ENCODE measurements at regions of chr1 and their contacts with region 1.

Region 1: DNA sequence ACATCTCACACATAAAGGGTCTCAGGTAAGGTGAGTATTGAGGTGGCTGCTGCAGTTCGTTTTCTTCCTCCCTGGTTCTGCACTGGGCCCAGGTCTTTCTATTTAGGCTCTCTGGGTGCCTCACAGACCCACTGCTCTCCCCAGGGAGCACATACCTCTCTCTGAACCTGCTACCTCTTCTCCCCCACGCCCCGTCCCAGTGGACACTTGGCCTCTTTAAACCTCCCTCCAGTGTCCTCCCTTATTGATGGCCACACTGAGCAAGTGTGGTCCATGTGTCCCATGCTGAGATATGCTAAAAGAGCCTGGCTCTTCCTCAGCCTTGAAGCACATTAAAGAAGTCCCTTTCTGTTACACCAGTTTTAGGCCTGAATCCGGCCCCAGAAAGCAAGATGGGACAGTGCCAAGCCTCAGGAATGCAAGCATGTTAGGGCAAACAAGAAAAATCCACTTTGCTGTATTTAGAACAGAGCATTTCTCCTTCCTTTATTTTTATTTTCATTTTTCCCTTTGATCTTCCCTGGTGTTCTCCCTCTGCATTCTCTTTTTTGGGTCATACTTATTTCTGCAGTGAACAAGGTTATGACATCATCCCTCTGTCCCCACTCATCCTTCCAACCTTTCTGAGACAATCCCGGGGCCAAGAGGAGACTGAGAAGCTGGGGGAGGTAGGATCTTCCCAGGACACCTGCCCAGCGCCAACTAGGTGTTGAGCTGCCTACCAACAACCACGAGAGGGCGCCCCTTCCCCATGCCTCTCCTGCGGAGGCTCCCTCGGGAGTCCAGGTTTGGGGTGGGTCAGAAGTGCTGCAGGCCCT is 5.0 kb upstream of the CHI3L2 start:
- DNase-seq: peak; percentile 43 to 89 (median 80)
- ATAC-seq: peak; percentile 17
- H3K4me3 ChIP-seq: peak overlapping the region; percentile 38 to 42
- H3K4me3 Mint-ChIP-seq: peak overlapping the region; percentile 81
- H3K27ac ChIP-seq: peak overlapping the region; percentile 44 to 84
- H3K27ac Mint-ChIP-seq: peak overlapping the region; percentile 94
- H3K4me1 ChIP-seq: peaks cover 97% of the 10 kb centered on the region
- H3K4me1 Mint-ChIP-seq: peaks cover 91% of the 10 kb centered on the region
- H3K27me3 ChIP-seq: no peaks in the 10 kb centered on the region
- H3K27me3 Mint-ChIP-seq: no peaks in the 10 kb centered on the region
- CTCF ChIP-seq: peak; percentile 85

Region 2: DNA sequence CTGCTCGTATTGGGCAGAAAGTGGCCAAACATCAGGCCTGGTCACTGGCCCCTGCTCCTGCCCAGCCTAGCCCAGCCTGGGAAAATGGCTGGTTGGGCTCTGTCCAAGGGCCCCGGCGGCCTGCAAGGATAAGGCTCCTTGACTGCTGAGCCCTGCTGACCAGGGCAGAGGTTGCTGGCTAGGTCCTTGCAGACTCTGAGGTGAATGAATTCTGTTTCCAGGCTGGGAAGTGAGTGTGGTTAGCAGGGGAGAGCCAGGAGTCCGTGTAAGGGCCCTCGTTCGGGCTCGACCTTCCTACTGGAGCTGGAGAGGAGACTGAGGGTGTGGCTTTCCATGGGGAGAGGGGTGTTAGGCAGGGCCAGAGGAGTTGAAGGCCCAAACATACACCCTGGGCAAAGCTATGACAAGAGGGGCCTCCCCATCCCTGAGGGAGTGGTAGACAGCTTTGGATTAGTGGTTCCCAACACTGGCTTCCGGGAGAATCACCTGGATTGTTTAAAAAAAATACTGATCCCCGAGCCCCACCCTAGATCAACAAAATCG is 1291.3 kb before region 1 on chr1:
- CTCF ChIA-PET with region 1: no interaction called
- POLR2A ChIA-PET with region 1: no interaction called
- intact Hi-C with region 1: no loop called
- DNase-seq: peak in 1 of 9 experiments; percentile 7
- ATAC-seq: no peak
- H3K4me3 ChIP-seq: no peak overlapping the region
- H3K4me3 Mint-ChIP-seq: no peak overlapping the region
- H3K27ac ChIP-seq: no peak overlapping the region
- H3K27ac Mint-ChIP-seq: no peak overlapping the region
- H3K4me1 ChIP-seq: no peaks in the 10 kb centered on the region
- H3K4me1 Mint-ChIP-seq: peaks cover 2% of the 10 kb centered on the region
- H3K27me3 ChIP-seq: no peaks in the 10 kb centered on the region
- H3K27me3 Mint-ChIP-seq: no peaks in the 10 kb centered on the region
- CTCF ChIP-seq: no peak

Region 3: DNA sequence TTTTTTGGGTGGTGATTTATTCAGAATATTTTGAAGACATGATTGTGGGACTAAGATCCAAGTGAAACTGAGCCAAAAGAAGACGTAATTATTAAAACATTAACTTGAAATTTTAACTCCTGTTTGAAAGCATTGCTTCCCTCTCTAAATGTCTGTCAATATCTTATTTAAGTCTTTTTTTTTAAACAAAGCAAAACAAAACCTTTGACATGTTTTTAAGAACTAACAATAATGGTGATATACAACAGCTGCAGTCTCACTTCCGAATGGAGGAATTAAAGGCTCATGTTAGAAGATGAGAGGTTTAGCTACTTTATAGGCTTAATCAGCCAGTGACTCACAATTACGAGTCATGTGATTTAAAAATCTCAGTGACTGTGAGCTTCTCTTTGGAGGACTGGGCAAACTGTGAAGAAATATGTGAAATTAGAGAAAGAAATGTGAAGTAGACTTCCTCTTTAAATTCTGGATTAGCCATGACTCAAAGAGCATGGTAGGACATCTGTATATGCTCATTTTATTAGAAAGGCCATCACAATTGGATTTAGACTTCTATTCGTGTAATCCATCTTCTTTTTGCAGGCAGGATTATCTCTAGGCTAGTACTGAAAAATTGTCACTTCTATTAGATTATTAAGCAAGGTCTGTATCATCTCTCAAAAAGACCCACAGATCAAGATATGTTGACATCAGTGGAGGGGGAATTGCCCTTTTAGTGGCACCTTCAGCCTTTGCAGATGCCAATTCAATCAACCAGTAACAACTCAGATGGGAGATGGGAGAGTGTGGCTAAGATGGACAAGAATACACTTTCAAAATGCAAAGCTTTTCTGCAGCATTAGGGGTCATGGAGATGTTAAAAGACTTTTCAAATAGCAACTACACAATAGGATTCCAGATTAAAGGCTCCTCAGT is 576.4 kb before region 1 on chr1:
- CTCF ChIA-PET with region 1: no interaction called
- POLR2A ChIA-PET with region 1: no interaction called
- intact Hi-C with region 1: loop called in 1 of 2 experiments (anchors 10 kb)
- DNase-seq: peak in 2 of 9 experiments; percentile 27 to 53
- ATAC-seq: peak; percentile 28
- H3K4me3 ChIP-seq: no peak overlapping the region
- H3K4me3 Mint-ChIP-seq: no peak overlapping the region
- H3K27ac ChIP-seq: peak overlapping the region in 1 of 2 experiments; percentile 70
- H3K27ac Mint-ChIP-seq: peak overlapping the region; percentile 28
- H3K4me1 ChIP-seq: peaks cover 77% of the 10 kb centered on the region
- H3K4me1 Mint-ChIP-seq: peaks cover 43% of the 10 kb centered on the region
- H3K27me3 ChIP-seq: no peaks in the 10 kb centered on the region
- H3K27me3 Mint-ChIP-seq: no peaks in the 10 kb centered on the region
- CTCF ChIP-seq: no peak

Region 4: GRCh38 chr1:111030590-111030989 is 191.9 kb before region 1 on chr1:
- CTCF ChIA-PET with region 1: interaction called, 15 read pairs
- POLR2A ChIA-PET with region 1: no interaction called
- intact Hi-C with region 1: no loop called
- DNase-seq: peak in 8 of 9 experiments; percentile 37 to 74 (median 56)
- ATAC-seq: no peak
- H3K4me3 ChIP-seq: no peak overlapping the region
- H3K4me3 Mint-ChIP-seq: no peak overlapping the region
- H3K27ac ChIP-seq: no peak overlapping the region
- H3K27ac Mint-ChIP-seq: no peak overlapping the region
- H3K4me1 ChIP-seq: no peaks in the 10 kb centered on the region
- H3K4me1 Mint-ChIP-seq: no peaks in the 10 kb centered on the region
- H3K27me3 ChIP-seq: no peaks in the 10 kb centered on the region
- H3K27me3 Mint-ChIP-seq: peaks cover 9% of the 10 kb centered on the region
- CTCF ChIP-seq: peak; percentile 81

Region 5: GRCh38 chr1:111197598-111198284 is 24.8 kb before region 1 on chr1:
- CTCF ChIA-PET with region 1: interaction called, 429 read pairs
- POLR2A ChIA-PET with region 1: interaction called, 430 read pairs
- intact Hi-C with region 1: loop called in 1 of 2 experiments (anchors 1 kb)
- DNase-seq: peak; percentile 54 to 90 (median 73)
- ATAC-seq: peak; percentile 47
- H3K4me3 ChIP-seq: peak overlapping the region; percentile 74 to 93
- H3K4me3 Mint-ChIP-seq: peak overlapping the region; percentile 94
- H3K27ac ChIP-seq: peak overlapping the region; percentile 55 to 84
- H3K27ac Mint-ChIP-seq: peak overlapping the region; percentile 97
- H3K4me1 ChIP-seq: peaks cover 62% of the 10 kb centered on the region
- H3K4me1 Mint-ChIP-seq: peaks cover 75% of the 10 kb centered on the region
- H3K27me3 ChIP-seq: no peaks in the 10 kb centered on the region
- H3K27me3 Mint-ChIP-seq: no peaks in the 10 kb centered on the region
- CTCF ChIP-seq: no peak

Region 6: DNA sequence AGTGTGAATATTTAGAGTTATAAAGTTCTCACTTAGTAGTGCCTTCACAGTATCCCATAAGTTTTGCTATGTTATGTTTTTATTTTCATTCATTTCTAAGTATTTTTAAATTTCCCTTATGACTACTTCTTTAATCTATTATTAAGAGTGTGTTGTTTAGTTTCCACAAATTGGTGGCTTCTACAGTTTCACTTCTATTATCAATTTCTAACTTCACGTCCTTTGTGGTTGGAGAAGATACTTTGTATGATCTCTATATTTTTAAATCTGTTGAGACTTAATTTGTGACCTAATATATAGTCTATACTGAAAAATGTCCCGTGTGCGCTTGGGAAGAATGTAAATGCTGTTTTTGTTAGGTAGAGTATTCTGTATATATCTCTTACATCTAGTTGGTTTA is 79.9 kb after region 1 on chr1:
- CTCF ChIA-PET with region 1: no interaction called
- POLR2A ChIA-PET with region 1: no interaction called
- intact Hi-C with region 1: no loop called
- DNase-seq: no peak
- ATAC-seq: no peak
- H3K4me3 ChIP-seq: no peak overlapping the region
- H3K4me3 Mint-ChIP-seq: no peak overlapping the region
- H3K27ac ChIP-seq: no peak overlapping the region
- H3K27ac Mint-ChIP-seq: no peak overlapping the region
- H3K4me1 ChIP-seq: no peaks in the 10 kb centered on the region
- H3K4me1 Mint-ChIP-seq: no peaks in the 10 kb centered on the region
- H3K27me3 ChIP-seq: no peaks in the 10 kb centered on the region
- H3K27me3 Mint-ChIP-seq: no peaks in the 10 kb centered on the region
- CTCF ChIP-seq: no peak

Region 7: DNA sequence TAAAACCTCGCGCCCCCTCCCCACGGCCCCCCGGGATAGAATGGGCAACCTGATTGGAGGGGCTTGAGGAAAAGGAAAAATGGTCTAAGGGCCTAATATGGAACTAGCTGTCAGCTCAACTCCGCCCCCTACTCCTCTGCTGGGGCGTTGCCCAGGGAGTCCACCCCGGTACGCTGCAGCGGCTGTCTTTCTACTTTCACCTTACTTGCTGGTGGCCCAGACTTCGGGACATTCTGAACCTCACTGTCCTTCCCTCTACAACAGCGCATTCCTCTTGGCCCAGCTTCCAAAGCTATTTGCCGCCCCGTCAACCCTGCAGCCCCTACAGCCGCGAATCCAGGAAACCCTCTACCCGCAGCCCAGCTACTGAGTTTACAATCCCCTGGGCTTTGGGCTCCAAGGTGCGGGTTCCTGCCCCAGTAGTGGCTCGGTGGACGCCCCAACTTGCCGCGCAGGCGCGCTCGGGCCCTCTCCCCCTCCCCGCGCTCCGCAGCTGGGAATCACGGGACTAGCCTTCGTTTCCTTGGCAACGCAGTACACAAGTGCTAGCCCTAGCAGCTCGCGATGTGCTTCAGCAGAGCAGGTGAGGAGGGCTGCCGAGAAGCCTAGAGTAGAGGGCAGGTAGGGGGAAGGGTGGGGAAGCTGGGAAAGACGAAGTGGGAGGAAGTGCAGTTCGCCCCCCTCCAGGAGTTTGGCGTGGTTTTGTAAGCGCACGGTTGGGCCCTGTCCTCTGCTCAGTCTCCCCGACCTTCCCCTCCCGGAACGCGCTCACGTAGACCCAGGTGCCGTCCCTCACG is 123.8 kb after region 1 on chr1:
- CTCF ChIA-PET with region 1: interaction called, 10 read pairs
- POLR2A ChIA-PET with region 1: interaction called, 3 read pairs
- intact Hi-C with region 1: loop called (anchors 5 kb)
- DNase-seq: peak; percentile 75 to 96 (median 87)
- ATAC-seq: peak; percentile 86
- H3K4me3 ChIP-seq: peak overlapping the region; percentile 67 to 68
- H3K4me3 Mint-ChIP-seq: peak overlapping the region; percentile 89
- H3K27ac ChIP-seq: peak overlapping the region; percentile 51 to 63
- H3K27ac Mint-ChIP-seq: peak overlapping the region; percentile 90
- H3K4me1 ChIP-seq: no peaks in the 10 kb centered on the region
- H3K4me1 Mint-ChIP-seq: peaks cover 23% of the 10 kb centered on the region
- H3K27me3 ChIP-seq: no peaks in the 10 kb centered on the region
- H3K27me3 Mint-ChIP-seq: no peaks in the 10 kb centered on the region
- CTCF ChIP-seq: no peak

Region 8: GRCh38 chr1:111592389-111593361 is 370.2 kb after region 1 on chr1:
- CTCF ChIA-PET with region 1: interaction called, 3 read pairs
- POLR2A ChIA-PET with region 1: no interaction called
- intact Hi-C with region 1: loop called (anchors 10 kb)
- DNase-seq: peak; percentile 75 to 96 (median 92)
- ATAC-seq: peak; percentile 91
- H3K4me3 ChIP-seq: peak overlapping the region in 1 of 2 experiments; percentile 38
- H3K4me3 Mint-ChIP-seq: peak overlapping the region; percentile 53
- H3K27ac ChIP-seq: peak overlapping the region; percentile 48 to 72
- H3K27ac Mint-ChIP-seq: peak overlapping the region; percentile 89
- H3K4me1 ChIP-seq: peaks cover 64% of the 10 kb centered on the region
- H3K4me1 Mint-ChIP-seq: peaks cover 58% of the 10 kb centered on the region
- H3K27me3 ChIP-seq: no peaks in the 10 kb centered on the region
- H3K27me3 Mint-ChIP-seq: no peaks in the 10 kb centered on the region
- CTCF ChIP-seq: no peak

Measured in CD8-positive, alpha-beta T cell (primary cell).